Right ventricle myocardium superior (tissue), 1 donor: ENCODE measurements at regions of chr12 and their contacts with region 1.

Region 1: DNA sequence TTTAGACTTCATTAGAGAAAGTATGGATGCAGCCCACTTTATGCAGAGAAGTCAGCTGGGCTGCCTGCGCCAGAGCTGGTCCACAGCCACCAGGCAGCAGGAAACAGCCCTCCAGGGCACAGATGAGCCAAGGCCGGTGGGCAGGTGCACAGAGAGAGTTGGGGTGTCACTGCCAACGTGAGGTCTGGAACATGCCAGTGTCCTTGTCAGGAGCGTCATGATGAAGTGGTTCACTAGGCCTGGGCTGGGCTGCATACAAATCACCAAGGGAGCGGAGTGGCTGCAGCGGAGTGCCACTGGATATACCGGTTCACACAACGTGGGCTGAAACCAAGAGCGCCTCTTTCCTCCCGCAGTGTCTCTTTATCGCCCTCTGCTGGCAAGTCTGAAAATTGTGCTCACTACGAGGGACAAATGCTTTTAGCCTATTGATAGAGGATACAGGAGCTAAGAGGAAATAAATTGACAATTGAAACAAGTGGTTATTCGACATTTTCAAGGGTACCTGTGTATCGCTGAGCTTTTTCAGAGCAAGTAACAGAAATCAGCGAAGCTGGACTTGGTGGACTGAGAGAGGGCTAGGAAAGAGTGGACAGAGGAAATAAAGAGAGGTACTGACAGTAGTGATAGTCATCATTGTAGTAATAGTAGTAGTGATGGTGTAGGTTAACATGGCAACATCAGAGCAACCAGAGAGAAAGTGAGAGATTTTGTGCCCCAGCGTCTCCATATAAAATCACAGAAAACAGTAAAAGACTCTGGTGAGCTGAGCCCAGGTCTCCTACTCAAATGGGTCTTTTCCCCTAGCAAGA is 52.0 kb upstream of the ITPR2 start:
- DNase-seq: peak; percentile 76
- ATAC-seq: peak; percentile 97

Region 2: GRCh38 chr12:26853303-26854030 is 31.5 kb before region 1 on chr12:
- intact Hi-C with region 1: loop called (anchors 5 kb)
- DNase-seq: peak; percentile 74
- ATAC-seq: peak; percentile 92